ENCODE measurements at regions of chr14 and their contacts with region 1.

Region 1: GRCh38 chr14:77097700-77098528 is at the start of gene CIPC:
- DNase-seq: peak; percentile 97
- ATAC-seq: peak; percentile 90
- H3K4me3 ChIP-seq: peak within 1 kb of the TSS; percentile 83
- H3K27ac ChIP-seq: peak within 1 kb of the TSS; percentile 87
- H3K4me1 ChIP-seq: peaks cover 17% of the 10 kb centered on the region
- H3K27me3 ChIP-seq: no peaks in the 10 kb centered on the region
- CTCF ChIP-seq: peak in 1 of 3 experiments; percentile 7; a peak in 1 of 6 replicates
- EP300 ChIP-seq: peak in 1 of 2 experiments; percentile 78; a peak in 2 of 4 replicates
- POLR2A ChIP-seq: peak; percentile 86
- RAD21 ChIP-seq: no peak
- polyA plus RNA-seq, gene CIPC: 5.6 to 6.6 TPM

Region 2: GRCh38 chr14:77086017-77086736 is 11.7 kb before region 1 on chr14:
- CTCF ChIA-PET with region 1: interaction called, 719 read pairs
- POLR2A ChIA-PET with region 1: interaction called, 5 read pairs
- RAD21 ChIA-PET with region 1: interaction called, 26 read pairs
- SMC1A ChIA-PET with region 1: interaction called, 214 read pairs
- in situ Hi-C with region 1: no loop called
- intact Hi-C with region 1: loop called (anchors 1 kb)
- DNase-seq: no peak
- ATAC-seq: peak; percentile 82
- H3K4me3 ChIP-seq: no peak overlapping the region
- H3K27ac ChIP-seq: no peak overlapping the region
- H3K4me1 ChIP-seq: peaks cover 21% of the 10 kb centered on the region
- H3K27me3 ChIP-seq: no peaks in the 10 kb centered on the region; a peak in 1 of 4 replicates
- CTCF ChIP-seq: no peak
- EP300 ChIP-seq: no peak
- POLR2A ChIP-seq: no peak
- RAD21 ChIP-seq: no peak

Region 3: GRCh38 chr14:77186911-77187648 is 89.2 kb after region 1 on chr14:
- CTCF ChIA-PET with region 1: no interaction called
- POLR2A ChIA-PET with region 1: no interaction called
- RAD21 ChIA-PET with region 1: no interaction called
- SMC1A ChIA-PET with region 1: no interaction called
- in situ Hi-C with region 1: no loop called
- intact Hi-C with region 1: no loop called
- DNase-seq: no peak
- ATAC-seq: peak; percentile 36
- H3K4me3 ChIP-seq: no peak overlapping the region
- H3K27ac ChIP-seq: no peak overlapping the region
- H3K4me1 ChIP-seq: peaks cover 4% of the 10 kb centered on the region
- H3K27me3 ChIP-seq: peaks cover 0 to 1% of the 10 kb centered on the region in 2 experiments; a peak in 2 of 4 replicates
- CTCF ChIP-seq: no peak
- EP300 ChIP-seq: no peak
- POLR2A ChIP-seq: no peak
- RAD21 ChIP-seq: no peak

Measured in GM12878 (cell line).